ENCODE measurements at regions of chr11 and their contacts with region 1.

Region 1: DNA sequence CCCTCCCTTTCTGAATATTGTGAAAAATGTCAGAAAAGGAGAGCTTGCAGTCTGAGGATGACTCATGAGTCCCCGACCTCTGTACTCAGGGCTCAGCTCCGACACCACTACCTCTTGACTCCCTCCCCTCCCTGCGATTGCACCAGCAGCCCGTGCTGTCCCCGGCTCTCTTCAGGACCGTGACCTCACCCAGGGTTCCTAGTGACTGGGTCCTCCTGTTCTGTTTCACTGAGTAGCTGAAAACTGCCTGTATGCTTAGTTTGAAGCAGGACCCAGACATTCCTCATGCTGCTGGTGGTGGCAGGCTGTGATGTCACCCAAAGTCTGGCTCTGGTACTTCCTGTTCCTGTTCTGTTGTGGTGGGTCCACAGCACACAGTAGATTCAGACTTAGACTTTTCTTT is 11.7 kb downstream of the PHRF1 start:
- DNase-seq: peak; percentile 96
- ATAC-seq: peak; percentile 98
- H3K4me3 ChIP-seq: no peak overlapping the region
- H3K27ac ChIP-seq: peak overlapping the region; percentile 70
- H3K4me1 ChIP-seq: peaks cover 54% of the 10 kb centered on the region
- H3K27me3 ChIP-seq: no peaks in the 10 kb centered on the region
- CTCF ChIP-seq: no peak; the same call in 1 of the 2 replicates
- EP300 ChIP-seq: peak in 1 of 2 experiments; percentile 53; a peak in 2 of 4 replicates
- POLR2A ChIP-seq: 0 out of 4 replicates have a peak, but pooled peaks of 1 of the 2 experiments have one; percentile 21
- RAD21 ChIP-seq: peak; percentile 37; the same call in 1 of the 2 replicates

Region 2: DNA sequence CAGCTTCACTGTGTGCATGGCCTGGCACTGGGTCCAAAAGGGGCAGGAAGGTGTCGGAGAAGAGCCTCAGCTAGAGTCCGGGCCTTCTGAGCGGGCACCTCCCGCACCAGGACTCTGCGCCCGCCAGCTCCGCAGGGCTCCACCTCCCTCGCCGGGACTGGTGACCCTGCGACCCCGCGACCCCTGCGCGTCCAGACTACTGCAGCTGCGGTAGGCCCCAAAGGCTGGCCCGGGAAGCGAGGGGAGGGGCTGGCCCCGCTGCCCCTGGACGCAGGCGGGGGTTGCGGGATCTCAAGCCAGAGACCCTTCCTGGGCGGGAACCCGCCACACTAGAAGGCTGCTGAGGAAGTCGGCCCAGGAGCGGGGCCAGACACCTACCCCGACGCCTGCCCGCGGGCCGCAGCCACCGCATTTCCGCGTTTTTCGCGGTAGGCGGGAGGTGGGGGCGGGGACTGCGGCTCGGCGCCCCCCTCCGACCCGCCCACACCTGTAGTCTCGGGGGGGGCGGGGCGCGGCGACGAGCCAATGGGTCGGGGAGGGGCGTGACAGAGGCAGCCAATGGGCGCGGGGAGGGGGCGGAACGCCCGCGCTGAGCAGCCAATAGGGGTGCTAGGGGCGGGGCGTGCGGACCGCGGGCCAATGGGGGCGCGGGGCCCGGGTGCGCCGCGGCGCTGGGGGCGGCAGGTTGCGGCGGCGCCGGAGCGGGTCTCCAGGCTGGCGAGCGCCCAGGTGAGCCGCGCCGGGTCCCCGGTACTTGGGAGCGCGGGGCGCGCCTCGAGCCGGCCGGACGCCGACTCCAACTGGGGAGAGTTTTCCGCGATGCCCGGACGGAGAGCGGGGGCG is 27.5 kb before region 1 on chr11 and contains the starts of genes LMNTD2 and RASSF7:
- CTCF ChIA-PET with region 1: no interaction called
- POLR2A ChIA-PET with region 1: interaction called, 7 read pairs
- in situ Hi-C with region 1: no loop called
- intact Hi-C with region 1: loop called (anchors 1 kb)
- DNase-seq: peak; percentile 75
- ATAC-seq: peak; percentile 56
- H3K4me3 ChIP-seq: peak within 1 kb of the TSS; percentile 80 to 95 (median 92)
- H3K27ac ChIP-seq: peak within 1 kb of the TSS; percentile 93
- H3K4me1 ChIP-seq: peaks cover 75% of the 10 kb centered on the region
- H3K27me3 ChIP-seq: no peaks in the 10 kb centered on the region
- CTCF ChIP-seq: no peak
- EP300 ChIP-seq: no peak
- POLR2A ChIP-seq: peak in 1 of 2 experiments; percentile 69; a peak in 2 of 4 replicates
- RAD21 ChIP-seq: no peak
- total RNA-seq, gene LMNTD2: 0.25 and 1.1 TPM in 2 replicates
- total RNA-seq, gene RASSF7: 13.1 and 20.2 TPM in 2 replicates

Region 3: GRCh38 chr11:575996-576768 is 11.8 kb before region 1 on chr11 and contains the start of gene PHRF1:
- CTCF ChIA-PET with region 1: no interaction called
- POLR2A ChIA-PET with region 1: interaction called, 33 read pairs
- in situ Hi-C with region 1: no loop called
- intact Hi-C with region 1: no loop called
- DNase-seq: peak; percentile 88
- ATAC-seq: peak; percentile 67
- H3K4me3 ChIP-seq: peak within 1 kb of the TSS; percentile 78 to 100 (median 92)
- H3K27ac ChIP-seq: peak within 1 kb of the TSS; percentile 100
- H3K4me1 ChIP-seq: peaks cover 65% of the 10 kb centered on the region
- H3K27me3 ChIP-seq: no peaks in the 10 kb centered on the region; a peak in 2 of 5 replicates
- CTCF ChIP-seq: no peak
- EP300 ChIP-seq: 0 out of 4 replicates have a peak, but pooled peaks of 1 of the 2 experiments have one; percentile 19
- POLR2A ChIP-seq: peak in 1 of 2 experiments; percentile 85; a peak in 2 of 4 replicates
- RAD21 ChIP-seq: no peak; the same call in 1 of the 2 replicates
- total RNA-seq, gene PHRF1: 13.7 and 16.7 TPM in 2 replicates

Region 4: DNA sequence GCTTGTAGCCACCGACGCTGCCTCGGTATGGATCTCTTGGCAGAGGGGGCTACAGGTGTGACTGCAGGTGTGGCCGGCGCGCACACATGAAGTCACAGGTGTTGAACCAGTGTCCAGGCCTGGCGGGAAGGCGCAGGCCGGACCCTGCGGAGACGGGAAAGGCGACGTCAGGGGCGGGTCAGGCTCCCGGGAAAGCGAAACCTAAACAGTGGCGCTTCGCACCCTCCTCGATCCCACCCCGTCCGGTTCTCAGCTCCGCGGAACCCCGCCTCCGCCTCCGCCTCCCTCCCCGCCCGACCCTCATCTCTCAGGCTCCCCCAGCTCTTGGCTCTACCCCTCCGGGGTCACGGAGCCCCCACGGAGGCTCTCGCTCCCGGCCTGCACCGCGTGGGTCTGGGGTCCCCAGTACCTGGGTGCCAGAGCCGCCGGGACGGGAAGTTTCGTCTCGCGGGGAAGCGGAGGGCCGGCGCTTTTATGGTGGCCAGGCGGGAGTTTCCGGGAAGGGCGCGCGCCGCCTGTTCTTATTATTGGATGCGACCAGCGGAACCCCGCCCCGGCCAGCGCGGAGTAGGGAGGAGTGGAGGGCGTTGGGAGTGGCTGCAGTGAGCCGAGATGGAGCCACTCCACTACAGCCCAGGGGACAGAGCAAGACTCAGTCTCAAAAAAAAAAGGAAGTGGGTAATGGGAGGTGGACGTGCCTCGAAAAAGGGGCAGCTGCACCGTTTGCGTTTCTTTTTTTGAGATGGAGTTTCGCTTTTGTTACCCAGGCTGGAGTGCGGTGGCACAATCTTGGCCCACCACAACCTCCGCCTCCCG is 27.7 kb after region 1 on chr11 and contains the start of gene IRF7:
- CTCF ChIA-PET with region 1: no interaction called
- POLR2A ChIA-PET with region 1: no interaction called
- in situ Hi-C with region 1: no loop called
- intact Hi-C with region 1: no loop called
- DNase-seq: no peak
- ATAC-seq: no peak
- H3K4me3 ChIP-seq: no peak within 1 kb of the TSS
- H3K27ac ChIP-seq: no peak within 1 kb of the TSS
- H3K4me1 ChIP-seq: no peaks in the 10 kb centered on the region
- H3K27me3 ChIP-seq: no peaks in the 10 kb centered on the region
- CTCF ChIP-seq: no peak
- EP300 ChIP-seq: no peak
- POLR2A ChIP-seq: no peak
- RAD21 ChIP-seq: no peak
- total RNA-seq, gene IRF7: not detected in 2 replicates

Measured in HepG2 (cell line).